ENCODE measurements at regions of chr15 and their contacts with region 1.

Region 1: GRCh38 chr15:41230650-41231533 is at the starts of genes CHP1 and EXD1:
- DNase-seq: peak; percentile 99
- ATAC-seq: peak; percentile 99
- H3K4me3 Mint-ChIP-seq: peak within 1 kb of the TSS; percentile 87
- H3K27ac Mint-ChIP-seq: peak within 1 kb of the TSS; percentile 86
- H3K4me1 Mint-ChIP-seq: peaks cover 29% of the 10 kb centered on the region
- H3K27me3 Mint-ChIP-seq: no peaks in the 10 kb centered on the region
- total RNA-seq, gene CHP1: 32.7 to 34.5 TPM
- total RNA-seq, gene EXD1: not detected

Region 2: DNA sequence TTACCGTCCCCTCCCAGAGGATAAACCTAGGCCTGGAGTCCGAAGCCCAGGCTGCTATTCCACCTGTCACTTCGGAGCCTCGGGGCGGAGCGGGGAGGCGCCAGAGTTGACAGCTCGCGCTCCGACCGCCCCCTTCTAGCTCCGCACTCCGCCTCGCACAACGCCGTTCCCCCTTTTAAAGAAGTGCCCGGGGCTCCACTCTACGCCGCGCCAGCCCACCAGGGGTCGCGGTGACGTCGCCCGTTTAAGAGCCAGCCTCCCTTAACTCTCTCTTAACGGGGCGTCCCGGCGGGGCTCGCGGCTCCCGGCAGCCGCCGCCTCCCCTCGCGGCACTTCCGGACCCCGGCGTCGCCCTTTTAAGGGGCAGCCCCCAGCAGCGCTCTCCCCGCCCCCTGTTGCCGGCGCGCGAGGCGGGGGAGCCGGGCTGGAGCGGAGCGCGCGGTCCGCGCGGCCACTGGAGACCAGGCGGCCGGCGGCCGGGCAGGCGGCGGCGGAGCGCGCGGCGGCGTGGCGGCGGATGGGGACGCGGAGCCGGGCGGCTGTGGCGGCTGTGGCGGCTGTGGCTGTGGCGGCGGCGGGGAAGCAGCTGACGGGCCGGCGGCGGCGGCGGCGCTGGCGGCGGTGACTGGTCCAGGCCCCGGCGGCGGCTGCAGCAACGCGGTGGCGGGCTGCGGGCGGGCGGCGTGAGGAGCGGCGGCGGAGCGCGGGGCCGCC is 907.5 kb before region 1 on chr15 and contains the start of gene INAFM2:
- CTCF ChIA-PET with region 1: no interaction called
- POLR2A ChIA-PET with region 1: no interaction called
- intact Hi-C with region 1: loop called in 1 of 2 experiments (anchors 5 kb)
- DNase-seq: peak; percentile 92
- ATAC-seq: peak; percentile 87
- H3K4me3 Mint-ChIP-seq: peak within 1 kb of the TSS; percentile 71
- H3K27ac Mint-ChIP-seq: no peak within 1 kb of the TSS
- H3K4me1 Mint-ChIP-seq: peaks cover 25% of the 10 kb centered on the region
- H3K27me3 Mint-ChIP-seq: no peaks in the 10 kb centered on the region
- total RNA-seq, gene INAFM2: 9.9 to 11.2 TPM

Region 3: GRCh38 chr15:40807028-40807887 is 423.6 kb before region 1 on chr15 and contains the starts of genes DNAJC17 and ZFYVE19:
- CTCF ChIA-PET with region 1: no interaction called
- POLR2A ChIA-PET with region 1: no interaction called
- intact Hi-C with region 1: loop called in 1 of 2 experiments (anchors 1 kb)
- DNase-seq: peak; percentile 97
- ATAC-seq: peak; percentile 98
- H3K4me3 Mint-ChIP-seq: peak within 1 kb of the TSS; percentile 91
- H3K27ac Mint-ChIP-seq: peak within 1 kb of the TSS; percentile 96
- H3K4me1 Mint-ChIP-seq: peaks cover 19% of the 10 kb centered on the region
- H3K27me3 Mint-ChIP-seq: no peaks in the 10 kb centered on the region
- total RNA-seq, gene DNAJC17: 41.5 to 43.6 TPM
- total RNA-seq, gene ZFYVE19: 27.5 to 33.7 TPM

Region 4: GRCh38 chr15:41283653-41284426 is 52.9 kb after region 1 on chr15:
- CTCF ChIA-PET with region 1: interaction called, 4 read pairs
- POLR2A ChIA-PET with region 1: interaction called, 5 read pairs
- intact Hi-C with region 1: loop called (anchors 1 kb)
- DNase-seq: peak; percentile 98
- ATAC-seq: peak; percentile 98
- H3K4me3 Mint-ChIP-seq: peak overlapping the region; percentile 90
- H3K27ac Mint-ChIP-seq: peak overlapping the region; percentile 95
- H3K4me1 Mint-ChIP-seq: peaks cover 42% of the 10 kb centered on the region
- H3K27me3 Mint-ChIP-seq: no peaks in the 10 kb centered on the region

Region 5: DNA sequence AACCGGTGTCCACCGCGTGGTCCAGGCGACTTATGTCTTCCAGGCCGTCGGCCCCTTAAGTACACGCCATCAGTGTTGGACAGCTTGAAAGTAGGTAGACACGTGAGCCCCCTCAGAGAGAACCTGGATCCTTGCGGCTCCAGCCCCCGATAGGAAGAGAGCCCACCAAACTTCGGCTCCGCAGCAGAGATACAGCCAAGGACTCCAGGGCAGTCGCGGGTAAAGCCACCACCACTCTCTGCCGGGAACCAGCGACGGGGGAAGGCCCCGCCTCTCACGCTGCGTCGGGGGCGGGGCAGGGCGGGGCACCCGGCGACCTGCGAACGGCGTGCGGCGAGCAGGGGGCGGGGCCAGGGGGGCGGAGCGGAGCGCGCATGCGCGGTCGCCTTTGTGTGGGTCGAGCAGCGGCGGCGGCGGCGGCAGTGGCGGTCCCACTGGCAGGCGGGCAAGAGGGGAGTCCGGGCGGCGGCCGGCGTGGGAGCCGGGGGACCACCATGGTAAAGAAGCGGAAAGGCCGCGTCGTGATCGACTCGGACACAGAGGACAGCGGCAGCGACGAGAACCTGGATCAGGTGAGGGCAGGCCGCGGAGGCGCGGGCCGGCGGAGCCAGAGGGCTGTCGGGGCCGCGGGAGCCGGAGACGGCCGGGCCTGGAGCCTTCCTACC is 186.0 kb after region 1 on chr15 and contains the start of gene RTF1:
- CTCF ChIA-PET with region 1: no interaction called
- POLR2A ChIA-PET with region 1: no interaction called
- intact Hi-C with region 1: loop called in 1 of 2 experiments (anchors 2 kb)
- DNase-seq: peak; percentile 98
- ATAC-seq: peak; percentile 94
- H3K4me3 Mint-ChIP-seq: peak within 1 kb of the TSS; percentile 88
- H3K27ac Mint-ChIP-seq: peak within 1 kb of the TSS; percentile 92
- H3K4me1 Mint-ChIP-seq: peaks cover 38% of the 10 kb centered on the region
- H3K27me3 Mint-ChIP-seq: no peaks in the 10 kb centered on the region
- total RNA-seq, gene RTF1: 29.4 to 32.3 TPM

Region 6: GRCh38 chr15:41530363-41530956 is 299.6 kb after region 1 on chr15:
- CTCF ChIA-PET with region 1: no interaction called
- POLR2A ChIA-PET with region 1: no interaction called
- intact Hi-C with region 1: no loop called
- DNase-seq: no peak
- ATAC-seq: no peak
- H3K4me3 Mint-ChIP-seq: no peak overlapping the region
- H3K27ac Mint-ChIP-seq: no peak overlapping the region
- H3K4me1 Mint-ChIP-seq: no peaks in the 10 kb centered on the region
- H3K27me3 Mint-ChIP-seq: no peaks in the 10 kb centered on the region

Region 7: GRCh38 chr15:41827880-41828806 is 597.3 kb after region 1 on chr15 and contains the start of gene JMJD7:
- CTCF ChIA-PET with region 1: no interaction called
- POLR2A ChIA-PET with region 1: no interaction called
- intact Hi-C with region 1: loop called in 1 of 2 experiments (anchors 2 kb)
- DNase-seq: peak; percentile 99
- ATAC-seq: peak; percentile 96
- H3K4me3 Mint-ChIP-seq: peak within 1 kb of the TSS; percentile 80
- H3K27ac Mint-ChIP-seq: peak within 1 kb of the TSS; percentile 69
- H3K4me1 Mint-ChIP-seq: peaks cover 41% of the 10 kb centered on the region
- H3K27me3 Mint-ChIP-seq: no peaks in the 10 kb centered on the region
- total RNA-seq, gene JMJD7: 17.1 to 17.6 TPM

Measured in activated CD4-positive, alpha-beta T cell treated with anti-CD3 and anti-CD28 coated beads for 36 hours (primary cell).